ENCODE measurements at regions of chr17 and their contacts with region 1.

Region 1: DNA sequence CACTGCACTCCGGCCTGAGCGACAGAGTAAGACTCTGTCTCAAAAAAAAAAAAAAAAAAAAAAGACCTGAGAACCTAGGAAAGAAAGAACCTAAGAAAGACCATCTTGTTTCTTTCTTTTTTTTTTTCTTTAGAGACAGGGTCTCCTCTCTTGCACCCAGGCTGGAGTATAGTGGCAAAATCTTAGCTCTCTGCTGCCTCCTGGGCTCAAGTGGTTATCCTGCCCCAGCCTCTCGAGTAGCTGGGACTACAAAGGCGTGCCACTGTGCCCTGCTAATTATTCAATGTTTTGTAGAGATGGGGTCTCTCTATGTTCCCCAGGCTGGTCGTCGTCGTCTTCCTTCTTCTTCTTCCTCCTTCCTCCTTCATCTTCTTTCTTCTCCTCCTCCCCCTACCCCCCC is 7.8 kb upstream of the BIRC5 start:
- DNase-seq: no peak
- H3K4me3 ChIP-seq: no peak overlapping the region
- H3K4me3 Mint-ChIP-seq: no peak overlapping the region
- H3K27ac Mint-ChIP-seq: no peak overlapping the region
- H3K4me1 ChIP-seq: no peaks in the 10 kb centered on the region
- H3K4me1 Mint-ChIP-seq: no peaks in the 10 kb centered on the region
- H3K27me3 ChIP-seq: no peaks in the 10 kb centered on the region
- H3K27me3 Mint-ChIP-seq: no peaks in the 10 kb centered on the region
- CTCF ChIP-seq: no peak

Region 2: DNA sequence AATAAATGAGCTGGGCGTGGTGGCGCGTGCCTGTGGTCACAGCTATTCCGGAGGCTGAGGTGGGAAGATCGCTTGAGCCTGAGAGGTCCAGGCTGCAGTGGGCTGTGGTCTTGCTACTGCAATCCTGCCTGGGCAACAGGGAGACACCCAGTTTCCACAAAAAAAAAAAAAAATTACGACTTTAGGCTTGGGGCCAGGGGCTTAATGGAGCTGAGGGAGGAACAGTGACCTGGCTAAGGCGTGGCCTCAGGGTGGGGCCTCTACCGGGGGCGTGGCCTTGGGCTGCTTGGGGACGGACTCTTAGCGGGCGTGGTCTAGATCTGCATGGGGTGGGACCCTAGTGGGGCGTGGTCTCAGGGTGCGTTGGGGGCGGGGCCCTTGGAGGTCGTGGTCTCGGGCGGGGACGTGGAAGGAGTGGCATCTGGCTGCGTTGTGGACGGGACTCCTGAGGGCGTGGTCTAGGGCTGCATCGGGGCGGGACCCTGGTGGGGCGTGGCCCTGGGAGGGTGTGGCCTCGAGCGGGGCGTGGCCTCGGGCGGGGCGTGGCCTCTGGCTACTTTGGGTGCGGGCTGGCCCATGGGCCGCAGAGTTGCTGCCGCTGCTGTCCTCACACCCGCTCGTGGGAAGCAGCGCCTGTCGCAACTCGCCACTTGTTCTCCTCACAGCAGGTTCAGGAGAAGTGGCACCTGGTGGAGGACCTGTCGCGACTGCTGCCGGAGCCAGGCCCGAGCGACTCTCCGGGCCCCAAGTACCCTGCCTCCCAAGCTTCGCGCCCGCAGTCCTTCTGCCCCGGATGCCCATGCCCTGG is 65.9 kb before region 1 on chr17:
- CTCF ChIA-PET with region 1: no interaction called
- POLR2A ChIA-PET with region 1: interaction called, 11 read pairs
- intact Hi-C with region 1: no loop called
- DNase-seq: peak; percentile 93 to 98
- H3K4me3 ChIP-seq: no peak overlapping the region
- H3K4me3 Mint-ChIP-seq: no peak overlapping the region
- H3K27ac Mint-ChIP-seq: peak overlapping the region; percentile 83
- H3K4me1 ChIP-seq: peaks cover 30% of the 10 kb centered on the region
- H3K4me1 Mint-ChIP-seq: peaks cover 5% of the 10 kb centered on the region
- H3K27me3 ChIP-seq: no peaks in the 10 kb centered on the region
- H3K27me3 Mint-ChIP-seq: no peaks in the 10 kb centered on the region
- CTCF ChIP-seq: no peak

Region 3: GRCh38 chr17:78168242-78168902 is 37.9 kb before region 1 on chr17 and contains the start of gene SYNGR2:
- CTCF ChIA-PET with region 1: no interaction called
- POLR2A ChIA-PET with region 1: no interaction called
- intact Hi-C with region 1: no loop called
- DNase-seq: peak; percentile 87 to 97
- H3K4me3 ChIP-seq: peak within 1 kb of the TSS; percentile 95
- H3K4me3 Mint-ChIP-seq: peak within 1 kb of the TSS; percentile 76
- H3K27ac Mint-ChIP-seq: peak within 1 kb of the TSS; percentile 77
- H3K4me1 ChIP-seq: peaks cover 20% of the 10 kb centered on the region
- H3K4me1 Mint-ChIP-seq: peaks cover 14% of the 10 kb centered on the region
- H3K27me3 ChIP-seq: no peaks in the 10 kb centered on the region
- H3K27me3 Mint-ChIP-seq: no peaks in the 10 kb centered on the region
- CTCF ChIP-seq: no peak
- total RNA-seq, gene SYNGR2: 169 and 193 TPM in 2 replicates